ENCODE measurements at regions of chr5 and their contacts with region 1.

Region 1: GRCh38 chr5:129460936-129461711 is 1.0 kb downstream of the ADAMTS19 start:
- DNase-seq: peak in 1 of 2 experiments; percentile 84
- H3K4me3 ChIP-seq: peak overlapping the region; percentile 72 to 88 (median 84)
- H3K27ac ChIP-seq: 0 out of 2 replicates have a peak overlapping the region, but pooled peaks have one; percentile 5
- H3K4me1 ChIP-seq: peaks cover 2 to 9% (median 5%) of the 10 kb centered on the region in 4 experiments; a peak in 4 of 7 replicates
- H3K27me3 ChIP-seq: no peaks in the 10 kb centered on the region
- CTCF ChIP-seq: peak; percentile 61 to 72 (median 67)
- EP300 ChIP-seq: no peak
- POLR2A ChIP-seq: peak; percentile 49 to 66
- RAD21 ChIP-seq: peak; percentile 62 to 74

Region 2: GRCh38 chr5:129392681-129393080 is 68.4 kb before region 1 on chr5:
- CTCF ChIA-PET with region 1: interaction called, 3 read pairs
- POLR2A ChIA-PET with region 1: interaction called, 33 read pairs
- DNase-seq: no peak
- H3K4me3 ChIP-seq: no peak overlapping the region
- H3K27ac ChIP-seq: no peak overlapping the region
- H3K4me1 ChIP-seq: peaks cover 0 to 7% (median 3%) of the 10 kb centered on the region in 4 experiments; a peak in 4 of 7 replicates
- H3K27me3 ChIP-seq: no peaks in the 10 kb centered on the region
- CTCF ChIP-seq: no peak
- EP300 ChIP-seq: no peak
- POLR2A ChIP-seq: no peak
- RAD21 ChIP-seq: no peak

Region 3: GRCh38 chr5:129400322-129400983 is 60.7 kb before region 1 on chr5:
- CTCF ChIA-PET with region 1: interaction called, 14 read pairs
- POLR2A ChIA-PET with region 1: interaction called, 33 read pairs
- DNase-seq: no peak
- H3K4me3 ChIP-seq: no peak overlapping the region
- H3K27ac ChIP-seq: no peak overlapping the region
- H3K4me1 ChIP-seq: peaks cover 3 to 24% (median 13%) of the 10 kb centered on the region in 4 experiments; a peak in 6 of 7 replicates
- H3K27me3 ChIP-seq: no peaks in the 10 kb centered on the region
- CTCF ChIP-seq: no peak
- EP300 ChIP-seq: no peak
- POLR2A ChIP-seq: no peak
- RAD21 ChIP-seq: no peak

Region 4: GRCh38 chr5:129477532-129477931 is 16.4 kb after region 1 on chr5:
- CTCF ChIA-PET with region 1: interaction called, 9 read pairs
- POLR2A ChIA-PET with region 1: interaction called, 15 read pairs
- DNase-seq: no peak
- H3K4me3 ChIP-seq: no peak overlapping the region
- H3K27ac ChIP-seq: no peak overlapping the region
- H3K4me1 ChIP-seq: peaks cover 0 to 4% (median 0%) of the 10 kb centered on the region in 4 experiments; a peak in 1 of 7 replicates
- H3K27me3 ChIP-seq: no peaks in the 10 kb centered on the region
- CTCF ChIP-seq: no peak
- EP300 ChIP-seq: no peak
- POLR2A ChIP-seq: no peak
- RAD21 ChIP-seq: no peak